ENCODE measurements at regions of chr2 and their contacts with region 1.

Region 1: DNA sequence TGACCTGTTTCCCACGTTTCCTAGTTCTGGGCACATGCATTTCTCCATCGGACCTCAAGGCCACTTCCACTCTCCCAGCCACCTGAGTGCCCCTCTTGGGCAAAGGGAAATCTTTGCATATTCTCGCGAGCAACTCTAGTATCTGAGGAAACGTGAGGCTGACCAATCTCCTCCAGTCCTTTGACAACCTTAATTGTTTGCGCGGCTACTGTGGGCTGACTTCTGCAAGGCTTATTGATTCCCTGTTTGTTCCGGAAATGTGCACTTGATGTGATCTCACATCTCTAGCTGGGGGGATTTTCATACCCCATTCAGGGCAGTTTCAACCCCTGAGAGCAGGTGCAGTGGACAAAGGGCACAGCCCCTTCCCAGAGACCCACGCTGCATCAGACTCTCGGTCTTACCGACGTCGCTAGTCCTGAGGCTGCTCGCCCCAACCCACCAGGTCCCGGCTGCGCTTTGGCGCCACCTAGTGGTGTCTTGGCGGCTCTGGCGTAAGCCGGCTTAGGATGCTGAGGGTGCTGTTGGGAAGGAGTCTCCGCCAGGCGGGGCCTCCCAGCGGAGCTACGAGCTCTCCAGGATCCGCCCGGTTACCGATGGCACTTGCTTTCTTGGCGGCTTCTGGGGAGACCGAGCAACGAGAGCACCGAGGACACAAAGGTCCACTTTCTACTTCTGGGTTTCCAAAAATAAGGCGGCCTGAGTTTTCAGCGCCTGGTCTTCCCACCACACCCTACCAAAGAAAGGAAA is 24.8 kb upstream of the SPR start:
- DNase-seq: peak; percentile 90
- H3K4me3 ChIP-seq: peak overlapping the region in 2 of 4 donors; percentile 18 to 31
- H3K27ac ChIP-seq: no peak overlapping the region
- H3K4me1 ChIP-seq: peaks cover 0 to 10% (median 8%) of the 10 kb centered on the region in 4 donors
- H3K27me3 ChIP-seq: peaks cover 51% of the 10 kb centered on the region
- CTCF ChIP-seq: peak; percentile 90 to 98 (median 97)
- EP300 ChIP-seq: no peak
- POLR2A ChIP-seq: no peak

Region 2: GRCh38 chr2:72770879-72771461 is 91.4 kb before region 1 on chr2:
- in situ Hi-C with region 1: loop called in 3 of 4 experiments (anchors 5 to 10 kb)
- intact Hi-C with region 1: loop called (anchors 2 kb)
- DNase-seq: peak; percentile 58
- H3K4me3 ChIP-seq: no peak overlapping the region
- H3K27ac ChIP-seq: no peak overlapping the region
- H3K4me1 ChIP-seq: peaks cover 0 to 3% (median 0%) of the 10 kb centered on the region in 4 donors
- H3K27me3 ChIP-seq: no peaks in the 10 kb centered on the region
- CTCF ChIP-seq: peak; percentile 83 to 89 (median 87)
- EP300 ChIP-seq: no peak
- POLR2A ChIP-seq: no peak

Region 3: DNA sequence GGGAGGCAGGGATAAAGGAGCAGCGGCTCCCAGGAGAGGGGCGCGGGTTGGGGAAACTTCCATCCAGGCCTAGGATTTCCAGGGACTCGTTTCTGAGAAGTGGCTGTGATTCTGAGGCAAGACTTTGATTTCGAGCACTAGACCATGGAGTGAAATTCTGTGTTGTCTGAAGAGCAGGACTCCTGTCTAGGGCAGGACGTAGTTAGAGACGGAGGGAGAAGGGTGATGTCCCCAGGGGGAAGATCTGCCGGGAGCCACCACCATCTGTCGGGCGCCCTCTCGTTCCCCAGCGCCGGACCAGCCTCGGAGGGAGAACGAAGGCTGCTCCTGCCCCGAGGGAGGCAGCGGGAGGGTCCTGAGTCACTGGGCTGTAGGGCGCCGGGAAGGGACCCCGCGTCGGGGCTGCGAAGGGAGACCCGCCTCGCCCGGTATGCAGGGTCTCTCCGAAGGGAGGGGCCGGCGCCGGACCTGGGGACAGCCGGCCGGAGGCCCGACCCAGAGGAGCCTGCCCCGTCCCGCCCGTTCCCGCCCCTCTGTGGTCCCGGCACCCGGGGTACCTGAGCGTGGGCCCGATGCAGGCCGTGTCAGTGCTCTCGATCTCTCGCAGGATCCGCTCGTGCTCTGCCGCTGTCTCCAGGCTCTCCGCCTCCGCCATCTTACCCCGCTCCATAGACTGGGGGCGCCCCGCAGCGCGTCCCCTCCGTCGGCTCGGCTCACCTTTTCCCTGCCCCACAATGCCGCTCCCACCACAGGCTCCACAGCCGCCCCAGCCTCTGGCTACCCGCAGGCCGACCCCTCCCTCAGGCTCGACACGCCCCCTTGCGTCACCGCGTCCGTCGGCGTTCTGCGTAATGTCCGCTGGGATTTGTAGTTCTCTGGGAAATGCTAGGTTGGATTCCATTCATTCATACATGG is 36.9 kb before region 1 on chr2 and contains the start of gene EXOC6B:
- in situ Hi-C with region 1: no loop called
- intact Hi-C with region 1: no loop called
- DNase-seq: peak; percentile 95
- H3K4me3 ChIP-seq: peak within 1 kb of the TSS; percentile 65 to 82 (median 72)
- H3K27ac ChIP-seq: peak within 1 kb of the TSS; percentile 80 to 86 (median 82)
- H3K4me1 ChIP-seq: peaks cover 7 to 20% (median 15%) of the 10 kb centered on the region in 4 donors
- H3K27me3 ChIP-seq: no peaks in the 10 kb centered on the region
- CTCF ChIP-seq: peak in 3 of 5 experiments; percentile 10 to 26 (median 15)
- EP300 ChIP-seq: no peak
- POLR2A ChIP-seq: peak; percentile 76
- total RNA-seq, gene EXOC6B: 15.7 to 58.4 (median 37.9) TPM

Region 4: DNA sequence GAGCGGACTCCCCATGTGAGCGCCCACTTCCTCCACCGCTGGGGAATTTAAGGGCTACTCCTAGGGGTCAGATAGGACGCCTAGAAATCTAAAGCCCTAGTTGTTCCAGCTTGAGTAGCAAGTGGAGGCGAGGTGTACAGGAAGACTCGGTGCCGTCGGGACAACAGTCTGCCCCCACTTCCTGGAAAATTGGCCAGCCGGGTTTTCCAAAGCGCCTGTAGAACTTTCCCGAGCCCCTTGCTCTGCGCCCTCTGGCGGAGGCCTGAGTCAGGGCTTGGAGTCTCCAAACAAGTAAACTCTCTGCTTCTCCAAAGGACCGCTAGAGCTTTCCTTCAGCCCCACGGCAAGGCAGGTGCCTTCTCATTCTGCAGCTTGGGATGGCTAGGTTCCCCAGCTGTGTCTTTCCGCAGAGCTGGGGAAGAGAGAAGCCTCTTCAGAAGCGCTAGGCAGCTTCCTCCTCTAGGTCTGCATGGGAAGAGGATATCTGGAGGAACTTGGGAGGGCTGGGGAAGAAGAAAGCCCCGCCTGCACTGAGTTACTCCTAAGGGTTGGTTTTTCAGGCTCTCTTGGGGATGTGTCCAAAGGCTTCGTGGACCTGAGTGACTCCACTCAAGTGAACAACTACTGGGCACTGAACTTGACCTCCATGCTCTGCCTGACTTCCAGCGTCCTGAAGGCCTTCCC is 25.5 kb after region 1 on chr2:
- in situ Hi-C with region 1: no loop called
- intact Hi-C with region 1: no loop called
- DNase-seq: peak; percentile 93
- H3K4me3 ChIP-seq: peak overlapping the region; percentile 68 to 95 (median 72)
- H3K27ac ChIP-seq: peak overlapping the region; percentile 91 to 95 (median 92)
- H3K4me1 ChIP-seq: peaks cover 5 to 43% (median 27%) of the 10 kb centered on the region in 4 donors
- H3K27me3 ChIP-seq: peaks cover 11% of the 10 kb centered on the region
- CTCF ChIP-seq: peak; percentile 85 to 93 (median 91)
- EP300 ChIP-seq: no peak
- POLR2A ChIP-seq: no peak